Activated T-helper 2 cell treated with anti-CD3 and anti-CD28 coated beads, Interferon-gamma antibody, Interleukin-2, Interleukin-4, amounts not matched to agents 10 μg/mL and 5 μg/mL and 100 μg/mL, durations not matched to agents 14 hours and 24 hours and 36 hours (primary cell): ENCODE measurements at regions of chr11 and their contacts with region 1.

Region 1: DNA sequence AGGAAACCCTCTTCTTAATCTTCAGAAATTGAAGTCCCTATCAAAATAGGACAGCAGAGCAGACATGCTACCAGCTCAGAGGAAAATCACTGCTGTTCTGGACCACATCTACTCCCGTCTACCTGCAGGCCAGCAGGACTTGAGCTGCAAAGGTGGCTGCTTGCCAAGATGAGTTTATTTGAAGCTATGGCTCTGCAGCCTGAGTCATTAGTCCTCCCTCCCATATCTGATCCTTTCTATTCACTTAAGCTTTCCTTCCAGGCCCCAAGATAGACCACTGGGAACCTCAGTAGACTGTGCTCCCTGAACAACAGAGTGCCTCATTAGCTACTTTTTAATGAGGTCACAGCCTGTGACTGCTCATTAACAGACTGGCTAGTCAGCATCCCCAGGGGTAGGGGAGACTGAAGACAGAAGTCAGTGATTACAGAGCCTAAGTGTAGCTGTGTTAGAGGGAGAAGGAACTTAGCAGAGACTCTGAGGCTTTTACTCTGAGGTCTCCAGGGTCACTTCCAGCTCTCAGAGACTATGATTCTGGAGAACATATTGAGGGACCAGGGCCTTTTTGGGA is 6.8 kb upstream of the OR10A2 start:
- DNase-seq: no peak
- H3K4me3 Mint-ChIP-seq: no peak overlapping the region
- H3K27ac Mint-ChIP-seq: no peak overlapping the region
- H3K4me1 Mint-ChIP-seq: peaks cover 12% of the 10 kb centered on the region
- H3K27me3 Mint-ChIP-seq: peaks cover 3% of the 10 kb centered on the region

Region 2: GRCh38 chr11:6746086-6746618 is 109.9 kb before region 1 on chr11:
- intact Hi-C with region 1: loop called (anchors 5 kb)
- DNase-seq: peak; percentile 49
- H3K4me3 Mint-ChIP-seq: no peak overlapping the region
- H3K27ac Mint-ChIP-seq: no peak overlapping the region
- H3K4me1 Mint-ChIP-seq: peaks cover 24% of the 10 kb centered on the region
- H3K27me3 Mint-ChIP-seq: no peaks in the 10 kb centered on the region

Region 3: DNA sequence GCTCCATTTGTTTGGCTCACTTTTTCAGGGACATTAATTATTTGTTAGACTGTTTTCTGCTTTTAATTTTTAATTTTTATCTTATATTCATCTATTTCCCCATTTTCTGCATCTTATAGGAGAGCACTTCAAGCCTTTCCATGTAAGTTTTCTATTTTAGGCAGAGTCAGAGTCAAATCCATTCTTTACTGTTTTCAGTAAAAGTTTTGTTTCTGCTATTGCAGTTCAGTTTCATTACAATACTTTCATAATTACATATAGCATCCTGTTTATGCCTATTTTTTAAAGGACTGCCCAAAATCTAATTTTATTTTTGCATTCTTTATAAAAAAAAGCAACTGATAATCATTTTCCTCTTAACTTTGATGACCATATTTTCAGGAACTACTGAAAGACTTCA is 14.4 kb before region 1 on chr11:
- intact Hi-C with region 1: loop called (anchors 1 kb)
- DNase-seq: no peak
- H3K4me3 Mint-ChIP-seq: no peak overlapping the region
- H3K27ac Mint-ChIP-seq: no peak overlapping the region
- H3K4me1 Mint-ChIP-seq: peaks cover 7% of the 10 kb centered on the region
- H3K27me3 Mint-ChIP-seq: peaks cover 3% of the 10 kb centered on the region

Region 4: DNA sequence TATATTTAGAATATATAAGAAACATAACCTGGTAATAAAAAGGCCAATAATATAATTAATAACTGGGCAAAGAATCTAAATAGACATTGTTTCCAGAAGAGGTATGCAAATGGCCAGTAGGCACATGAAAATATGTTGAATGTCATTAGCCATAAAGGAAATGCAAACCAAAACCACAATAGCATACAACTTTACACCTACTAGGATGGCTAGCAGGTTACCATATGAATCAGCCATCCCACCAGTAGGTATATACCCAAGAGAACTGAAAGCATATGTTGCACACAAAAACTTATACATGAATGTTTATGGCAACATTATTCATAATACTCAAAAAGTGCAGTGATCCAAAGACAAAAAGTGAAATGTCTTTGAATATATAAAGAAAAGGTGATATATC is 39.0 kb after region 1 on chr11:
- intact Hi-C with region 1: loop called (anchors 1 kb)
- DNase-seq: no peak
- H3K4me3 Mint-ChIP-seq: no peak overlapping the region
- H3K27ac Mint-ChIP-seq: no peak overlapping the region
- H3K4me1 Mint-ChIP-seq: peaks cover 8% of the 10 kb centered on the region
- H3K27me3 Mint-ChIP-seq: peaks cover 5% of the 10 kb centered on the region

Region 5: DNA sequence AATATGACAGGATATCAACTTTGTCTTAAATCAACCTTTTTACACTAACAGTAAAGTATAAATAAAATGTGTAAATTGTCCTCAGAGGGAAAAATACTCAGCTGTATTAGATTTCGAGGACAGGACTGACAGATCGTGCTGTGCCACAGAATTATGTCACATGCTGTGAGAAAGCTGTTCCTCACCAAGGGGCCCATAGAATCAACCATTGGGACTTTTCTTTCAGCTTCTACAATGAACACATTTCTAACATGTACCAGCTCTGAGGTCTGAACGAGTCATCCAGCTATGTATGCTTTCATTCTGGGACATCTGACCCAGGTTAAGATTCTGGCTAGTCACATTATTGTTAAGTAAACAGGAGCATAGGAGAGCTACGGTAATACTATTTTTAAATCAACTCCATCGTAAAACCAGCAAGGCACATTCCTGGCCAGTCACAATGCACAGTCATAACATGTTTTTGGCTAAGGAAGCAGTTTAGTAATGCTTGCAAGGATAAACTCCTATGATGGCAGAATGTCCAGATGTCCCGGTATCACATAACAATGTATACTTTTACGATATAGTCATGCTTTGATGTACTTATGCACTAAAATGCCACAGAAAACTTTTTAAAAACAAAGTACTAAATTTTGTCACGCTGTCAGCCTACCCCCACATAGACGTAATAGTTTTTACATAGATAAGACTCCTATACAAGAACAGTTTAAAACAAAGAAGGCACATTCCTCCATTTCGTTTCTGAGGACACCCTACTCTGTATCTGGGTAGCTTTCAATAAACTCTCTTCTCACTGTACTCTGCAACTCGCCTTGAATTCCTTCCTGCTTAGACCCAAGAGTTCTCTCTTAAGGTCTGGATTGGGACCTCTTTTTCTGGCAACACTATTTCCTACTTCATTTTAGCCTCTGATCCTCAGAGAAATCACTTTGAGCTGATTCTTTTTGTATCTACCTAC is 136.7 kb after region 1 on chr11:
- intact Hi-C with region 1: no loop called
- DNase-seq: no peak
- H3K4me3 Mint-ChIP-seq: no peak overlapping the region
- H3K27ac Mint-ChIP-seq: no peak overlapping the region
- H3K4me1 Mint-ChIP-seq: no peaks in the 10 kb centered on the region
- H3K27me3 Mint-ChIP-seq: no peaks in the 10 kb centered on the region

Region 6: DNA sequence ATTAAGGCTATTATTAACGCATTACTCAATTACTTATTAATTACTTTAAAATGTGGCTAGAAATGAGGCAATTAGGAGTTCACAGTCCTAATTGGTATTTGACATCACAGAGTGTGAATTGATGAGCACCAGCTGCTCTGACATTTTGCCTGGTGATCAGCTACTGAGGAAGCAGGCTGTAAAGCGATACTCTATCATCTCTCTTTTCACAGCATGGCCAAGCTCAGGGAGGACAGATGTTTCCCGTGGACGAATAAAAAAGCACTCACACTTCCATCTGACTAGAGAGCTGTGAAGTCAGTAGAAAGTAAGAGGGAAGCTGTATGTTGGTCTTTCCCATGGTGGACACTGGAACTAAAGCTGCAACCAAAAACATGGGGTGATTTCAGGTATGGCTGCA is 366.6 kb after region 1 on chr11:
- intact Hi-C with region 1: no loop called
- DNase-seq: no peak
- H3K4me3 Mint-ChIP-seq: no peak overlapping the region
- H3K27ac Mint-ChIP-seq: no peak overlapping the region
- H3K4me1 Mint-ChIP-seq: no peaks in the 10 kb centered on the region
- H3K27me3 Mint-ChIP-seq: peaks cover 2% of the 10 kb centered on the region